Activated CD4-positive, alpha-beta memory T cell treated with anti-CD3 and anti-CD28 coated beads for 36 hours (primary cell): ENCODE measurements at regions of chr2 and their contacts with region 1.

Region 1: GRCh38 chr2:27281855-27282559 is at the start of gene TRIM54:
- DNase-seq: no peak
- H3K4me3 Mint-ChIP-seq: no peak within 1 kb of the TSS
- H3K27ac Mint-ChIP-seq: no peak within 1 kb of the TSS
- H3K4me1 Mint-ChIP-seq: peaks cover 2% of the 10 kb centered on the region
- H3K27me3 Mint-ChIP-seq: peaks cover 20% of the 10 kb centered on the region
- total RNA-seq, gene TRIM54: not detected

Region 2: DNA sequence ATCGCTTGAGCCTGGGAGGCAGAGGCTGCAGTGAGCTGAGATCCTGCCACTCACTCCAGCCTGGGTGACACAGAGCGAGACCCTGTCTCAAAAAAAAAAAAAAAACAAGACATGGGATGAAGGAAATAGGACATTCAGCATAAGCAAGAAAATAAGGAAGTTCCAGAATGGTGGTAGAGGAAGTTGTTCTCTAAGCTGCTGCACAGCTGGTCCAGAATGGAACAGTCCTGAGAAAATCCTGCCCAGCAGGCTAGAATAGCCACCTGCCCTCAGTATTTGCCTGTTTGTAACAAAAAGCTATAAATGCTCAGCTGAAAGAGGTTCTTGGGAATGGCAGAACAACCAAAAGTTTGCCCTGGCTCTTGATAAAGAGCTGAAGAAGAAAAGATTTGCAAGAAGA is 322.7 kb before region 1 on chr2:
- CTCF ChIA-PET with region 1: interaction called, 69 read pairs
- POLR2A ChIA-PET with region 1: no interaction called
- intact Hi-C with region 1: loop called (anchors 2 kb)
- DNase-seq: no peak
- H3K4me3 Mint-ChIP-seq: no peak overlapping the region
- H3K27ac Mint-ChIP-seq: no peak overlapping the region
- H3K4me1 Mint-ChIP-seq: no peaks in the 10 kb centered on the region
- H3K27me3 Mint-ChIP-seq: peaks cover 18% of the 10 kb centered on the region

Region 3: GRCh38 chr2:27095745-27096651 is 186.0 kb before region 1 on chr2:
- CTCF ChIA-PET with region 1: interaction called, 82 read pairs
- POLR2A ChIA-PET with region 1: no interaction called
- intact Hi-C with region 1: loop called (anchors 1 kb)
- DNase-seq: peak; percentile 65
- H3K4me3 Mint-ChIP-seq: peak overlapping the region; percentile 31
- H3K27ac Mint-ChIP-seq: no peak overlapping the region
- H3K4me1 Mint-ChIP-seq: peaks cover 9% of the 10 kb centered on the region
- H3K27me3 Mint-ChIP-seq: no peaks in the 10 kb centered on the region

Region 4: DNA sequence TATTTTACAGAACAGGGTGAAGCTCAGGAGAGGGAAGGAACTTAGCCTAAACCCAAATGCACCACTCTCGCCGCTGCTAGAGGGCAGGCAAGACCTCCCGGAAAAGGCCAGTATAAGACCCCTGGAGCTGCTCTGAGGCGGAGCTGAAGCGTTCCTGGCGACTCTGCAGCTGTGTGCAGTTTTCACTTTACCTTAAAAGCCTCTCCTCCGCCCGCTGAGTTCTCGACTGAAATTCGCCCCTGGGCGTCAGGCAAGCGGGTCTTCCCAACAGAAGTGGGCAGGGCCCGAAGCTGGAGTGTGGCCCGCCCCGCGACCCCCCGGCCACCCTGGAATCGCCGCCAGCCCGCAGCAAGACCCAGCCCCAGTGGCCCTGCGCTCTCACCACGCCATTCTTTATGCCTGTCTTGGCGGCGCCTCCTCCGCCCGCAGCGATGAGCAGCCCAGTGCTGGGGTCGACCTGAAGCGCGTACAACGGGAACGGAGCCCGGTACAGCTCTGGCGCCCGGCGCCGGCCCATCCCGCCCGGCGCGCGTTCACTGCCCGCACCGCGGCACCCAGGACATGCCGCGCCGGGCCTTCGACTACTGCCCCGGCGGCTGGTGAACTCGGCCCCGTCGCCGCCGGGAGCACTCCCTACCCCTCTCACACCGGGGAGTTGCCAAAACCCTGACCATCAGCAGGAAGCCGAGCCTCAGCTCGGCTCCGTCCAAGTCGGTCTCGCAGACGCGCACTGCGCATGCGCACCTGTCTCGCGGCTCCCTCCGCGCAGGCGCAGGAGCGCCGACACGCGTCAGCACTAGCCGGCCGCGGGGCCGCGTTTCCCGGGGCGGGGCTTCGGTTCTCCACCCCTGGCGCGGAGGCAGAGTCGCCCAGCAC is 147.9 kb before region 1 on chr2 and contains the start of gene PREB:
- CTCF ChIA-PET with region 1: interaction called, 18 read pairs
- POLR2A ChIA-PET with region 1: no interaction called
- intact Hi-C with region 1: no loop called
- DNase-seq: peak; percentile 98
- H3K4me3 Mint-ChIP-seq: peak within 1 kb of the TSS; percentile 89
- H3K27ac Mint-ChIP-seq: peak within 1 kb of the TSS; percentile 86
- H3K4me1 Mint-ChIP-seq: peaks cover 20% of the 10 kb centered on the region
- H3K27me3 Mint-ChIP-seq: no peaks in the 10 kb centered on the region
- total RNA-seq, gene PREB: 64.7 to 65.4 TPM

Region 5: GRCh38 chr2:27249891-27250651 is 31.9 kb before region 1 on chr2:
- CTCF ChIA-PET with region 1: interaction called, 22 read pairs
- POLR2A ChIA-PET with region 1: interaction called, 3 read pairs
- intact Hi-C with region 1: loop called (anchors 1 kb)
- DNase-seq: peak; percentile 77
- H3K4me3 Mint-ChIP-seq: no peak overlapping the region
- H3K27ac Mint-ChIP-seq: no peak overlapping the region
- H3K4me1 Mint-ChIP-seq: no peaks in the 10 kb centered on the region
- H3K27me3 Mint-ChIP-seq: peaks cover 6% of the 10 kb centered on the region

Region 6: DNA sequence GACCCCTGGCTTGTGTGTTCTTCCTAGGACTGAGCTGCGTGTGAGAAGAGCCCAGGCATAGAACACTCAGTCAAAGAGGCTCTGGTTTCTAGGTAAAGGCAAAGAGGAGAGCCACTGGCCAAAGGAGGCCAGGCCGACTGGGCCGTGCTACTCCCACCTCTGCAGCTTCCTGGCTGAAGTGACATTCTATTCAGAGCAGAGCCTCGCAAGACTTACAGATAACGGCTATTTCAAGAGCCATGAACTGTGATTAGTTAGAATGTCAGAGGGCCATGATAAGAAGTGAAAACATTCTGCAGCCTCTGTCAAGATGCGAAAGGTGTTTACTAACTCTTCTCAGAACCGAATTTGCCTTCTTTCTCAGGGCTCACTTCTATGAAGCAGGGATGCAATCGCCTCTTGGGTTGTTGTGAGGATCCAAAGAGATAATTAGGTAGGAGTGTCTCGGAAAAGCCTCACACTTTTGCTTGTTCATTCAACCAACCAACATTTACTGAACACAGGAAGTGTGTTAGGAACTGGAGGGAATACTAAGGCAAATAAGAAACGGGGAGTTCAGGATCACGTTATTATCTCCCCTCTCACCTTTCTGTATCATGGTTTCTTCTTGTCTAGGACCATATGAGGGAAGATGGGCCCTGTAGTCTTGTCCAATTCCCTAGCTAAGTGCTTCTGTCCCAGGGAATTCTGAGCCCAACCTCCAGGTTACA is 10.2 kb before region 1 on chr2:
- CTCF ChIA-PET with region 1: interaction called, 94 read pairs
- POLR2A ChIA-PET with region 1: no interaction called
- intact Hi-C with region 1: no loop called
- DNase-seq: no peak
- H3K4me3 Mint-ChIP-seq: no peak overlapping the region
- H3K27ac Mint-ChIP-seq: no peak overlapping the region
- H3K4me1 Mint-ChIP-seq: no peaks in the 10 kb centered on the region
- H3K27me3 Mint-ChIP-seq: peaks cover 13% of the 10 kb centered on the region

Region 7: GRCh38 chr2:27370026-27370815 is 88.2 kb after region 1 on chr2 and contains the starts of genes EIF2B4 and SNX17:
- CTCF ChIA-PET with region 1: no interaction called
- POLR2A ChIA-PET with region 1: no interaction called
- intact Hi-C with region 1: no loop called
- DNase-seq: peak; percentile 100
- H3K4me3 Mint-ChIP-seq: peak within 1 kb of the TSS; percentile 87
- H3K27ac Mint-ChIP-seq: peak within 1 kb of the TSS; percentile 96
- H3K4me1 Mint-ChIP-seq: peaks cover 29% of the 10 kb centered on the region
- H3K27me3 Mint-ChIP-seq: no peaks in the 10 kb centered on the region
- total RNA-seq, gene EIF2B4: 34.6 to 36.5 TPM
- total RNA-seq, gene SNX17: 91.2 to 93.2 TPM

Region 8: DNA sequence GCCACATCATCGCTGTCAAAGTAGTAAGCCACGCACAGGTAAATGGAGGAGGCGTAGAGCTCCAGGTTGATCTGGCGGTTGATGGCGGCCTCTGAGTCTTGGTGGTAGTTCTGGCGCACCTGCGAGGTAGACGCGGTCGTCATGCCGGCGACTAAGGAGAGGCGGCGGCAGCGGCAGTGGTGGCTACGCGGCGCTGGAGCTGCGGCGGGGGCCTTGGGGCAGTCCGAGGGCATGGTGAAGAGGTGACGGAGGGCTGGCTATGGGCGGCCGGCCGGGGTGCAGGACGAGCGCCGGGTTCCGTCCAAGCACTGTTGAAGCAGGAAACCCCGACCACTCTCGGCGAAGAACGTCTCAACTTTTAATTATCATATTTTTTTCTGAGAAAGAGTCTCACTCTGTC is 111.2 kb after region 1 on chr2:
- CTCF ChIA-PET with region 1: no interaction called
- POLR2A ChIA-PET with region 1: no interaction called
- intact Hi-C with region 1: no loop called
- DNase-seq: no peak
- H3K4me3 Mint-ChIP-seq: no peak overlapping the region
- H3K27ac Mint-ChIP-seq: peak overlapping the region; percentile 23
- H3K4me1 Mint-ChIP-seq: peaks cover 38% of the 10 kb centered on the region
- H3K27me3 Mint-ChIP-seq: no peaks in the 10 kb centered on the region